Activated B cell treated with CpG ODN at 0.5 μM for 24 hours (primary cell): ENCODE measurements at regions of chr19 and their contacts with region 1.

Region 1: GRCh38 chr19:41263850-41264580 is at the start of gene HNRNPUL1:
- DNase-seq: peak; percentile 98
- ATAC-seq: peak; percentile 77
- H3K4me3 Mint-ChIP-seq: peak within 1 kb of the TSS; percentile 96
- H3K27ac Mint-ChIP-seq: peak within 1 kb of the TSS; percentile 99
- H3K4me1 Mint-ChIP-seq: peaks cover 48% of the 10 kb centered on the region
- H3K27me3 Mint-ChIP-seq: no peaks in the 10 kb centered on the region
- CTCF ChIP-seq: no peak
- total RNA-seq, gene HNRNPUL1: 235 and 244 TPM in 2 replicates

Region 2: DNA sequence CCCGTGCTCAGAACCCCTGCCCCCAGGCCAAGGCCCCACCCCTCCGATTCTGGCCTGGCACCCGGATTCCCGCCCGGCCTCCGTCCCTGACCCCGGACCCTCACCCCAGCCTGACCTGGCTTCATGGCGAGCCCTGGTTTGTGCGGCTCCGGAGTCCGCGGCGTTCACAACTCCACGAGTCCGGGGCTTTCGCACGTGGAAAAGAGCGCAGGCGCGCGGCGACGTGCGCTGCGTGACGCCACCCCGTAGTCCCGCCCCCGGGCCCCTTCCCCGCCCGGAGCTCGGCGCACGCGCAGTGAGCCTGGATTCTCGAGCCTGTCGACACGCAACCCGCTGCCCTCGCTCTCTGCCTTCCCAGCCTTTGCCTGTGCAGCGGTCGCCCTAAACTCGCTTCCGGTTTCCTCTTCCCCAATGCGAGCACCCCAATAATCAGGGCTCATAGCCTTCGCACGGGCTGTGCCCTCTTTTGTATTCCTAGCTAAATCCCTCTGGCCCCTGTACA is 1417.8 kb before region 1 on chr19 and contains the start of gene FBL:
- CTCF ChIA-PET with region 1: no interaction called
- POLR2A ChIA-PET with region 1: no interaction called
- intact Hi-C with region 1: loop called (anchors 5 kb)
- DNase-seq: peak; percentile 98
- ATAC-seq: peak; percentile 94
- H3K4me3 Mint-ChIP-seq: peak within 1 kb of the TSS; percentile 93
- H3K27ac Mint-ChIP-seq: peak within 1 kb of the TSS; percentile 93
- H3K4me1 Mint-ChIP-seq: peaks cover 45% of the 10 kb centered on the region
- H3K27me3 Mint-ChIP-seq: no peaks in the 10 kb centered on the region
- CTCF ChIP-seq: no peak
- total RNA-seq, gene FBL: 420 and 482 TPM in 2 replicates

Region 3: DNA sequence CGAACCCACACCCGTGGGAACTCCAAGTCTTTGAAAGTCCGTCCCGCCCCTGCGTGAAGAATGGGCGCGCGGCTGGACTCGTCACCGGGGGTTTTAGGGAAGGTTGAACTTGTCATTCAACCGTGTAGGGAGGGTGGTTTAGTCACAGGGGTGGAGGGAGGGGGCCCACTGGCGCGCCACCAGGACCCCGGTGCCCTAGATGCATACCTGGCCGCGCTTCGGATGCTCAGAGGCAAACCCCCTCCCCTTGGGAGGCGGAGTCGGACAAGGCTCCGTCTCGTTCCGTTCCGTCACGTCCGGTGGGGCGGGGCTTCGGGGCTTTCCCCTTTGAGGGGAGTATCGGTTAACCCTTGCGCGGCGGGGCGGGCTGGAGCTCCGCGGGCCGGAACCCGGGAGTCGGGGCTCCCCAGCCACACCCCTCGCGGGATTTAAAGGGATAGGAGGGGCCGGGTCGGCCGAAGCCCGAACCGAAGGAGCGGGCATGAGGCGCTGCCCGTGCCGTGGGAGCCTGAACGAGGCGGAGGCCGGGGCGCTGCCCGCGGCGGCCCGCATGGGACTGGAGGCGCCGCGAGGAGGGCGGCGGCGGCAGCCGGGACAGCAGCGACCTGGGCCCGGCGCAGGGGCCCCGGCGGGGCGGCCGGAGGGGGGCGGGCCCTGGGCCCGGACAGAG is 547.2 kb before region 1 on chr19 and contains the starts of genes COQ8B and ITPKC:
- CTCF ChIA-PET with region 1: no interaction called
- POLR2A ChIA-PET with region 1: interaction called, 10 read pairs
- intact Hi-C with region 1: loop called (anchors 1 kb)
- DNase-seq: peak; percentile 100
- ATAC-seq: peak; percentile 70
- H3K4me3 Mint-ChIP-seq: peak within 1 kb of the TSS; percentile 90
- H3K27ac Mint-ChIP-seq: peak within 1 kb of the TSS; percentile 95
- H3K4me1 Mint-ChIP-seq: peaks cover 63% of the 10 kb centered on the region
- H3K27me3 Mint-ChIP-seq: no peaks in the 10 kb centered on the region
- CTCF ChIP-seq: no peak
- total RNA-seq, gene COQ8B: 34.4 and 38.5 TPM in 2 replicates
- total RNA-seq, gene ITPKC: 13.0 and 13.3 TPM in 2 replicates

Region 4: DNA sequence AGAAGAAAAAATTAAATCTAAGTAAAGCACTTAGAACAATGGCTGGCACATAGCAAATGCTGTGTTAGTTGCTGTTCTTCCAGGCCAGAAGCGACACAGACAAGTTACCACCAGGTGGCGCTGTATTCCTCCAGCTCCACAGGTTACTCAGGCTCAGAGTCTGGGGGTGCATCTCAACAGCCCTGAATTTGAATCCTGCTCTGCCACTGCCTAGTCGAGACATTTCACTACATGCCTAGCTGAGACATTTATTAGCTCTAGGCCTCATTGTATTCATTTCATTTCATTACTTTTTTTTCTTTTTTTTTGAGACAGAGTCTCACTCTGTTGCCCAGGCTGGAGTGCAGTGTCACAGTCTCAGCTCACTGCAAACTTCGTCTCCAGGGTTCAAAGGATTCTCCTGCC is 289.4 kb before region 1 on chr19:
- CTCF ChIA-PET with region 1: no interaction called
- POLR2A ChIA-PET with region 1: interaction called, 5 read pairs
- intact Hi-C with region 1: loop called (anchors 1 kb)
- DNase-seq: peak; percentile 46
- ATAC-seq: peak; percentile 62
- H3K4me3 Mint-ChIP-seq: no peak overlapping the region
- H3K27ac Mint-ChIP-seq: no peak overlapping the region
- H3K4me1 Mint-ChIP-seq: no peaks in the 10 kb centered on the region
- H3K27me3 Mint-ChIP-seq: peaks cover 29% of the 10 kb centered on the region
- CTCF ChIP-seq: no peak

Region 5: DNA sequence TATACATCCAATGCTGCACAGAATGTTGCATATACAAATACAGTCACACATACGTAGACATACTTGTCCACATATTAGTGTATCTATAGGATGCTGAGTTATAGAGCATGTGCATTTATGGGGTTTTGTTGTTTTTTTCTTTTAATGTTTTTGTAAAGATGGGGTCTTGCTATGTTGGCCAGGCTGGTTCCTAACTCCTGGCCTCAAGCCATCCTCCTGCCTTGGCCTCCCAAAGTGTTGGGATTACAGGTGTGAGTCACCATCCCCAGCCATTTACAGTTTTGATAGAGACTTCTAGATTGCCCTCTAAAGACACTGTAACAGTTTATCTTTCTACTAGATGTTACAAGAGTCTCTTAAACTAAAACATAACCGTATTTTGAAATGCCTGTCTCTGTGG is 14.5 kb after region 1 on chr19:
- CTCF ChIA-PET with region 1: no interaction called
- POLR2A ChIA-PET with region 1: no interaction called
- intact Hi-C with region 1: no loop called
- DNase-seq: no peak
- ATAC-seq: no peak
- H3K4me3 Mint-ChIP-seq: no peak overlapping the region
- H3K27ac Mint-ChIP-seq: no peak overlapping the region
- H3K4me1 Mint-ChIP-seq: no peaks in the 10 kb centered on the region
- H3K27me3 Mint-ChIP-seq: no peaks in the 10 kb centered on the region
- CTCF ChIP-seq: no peak

Region 6: GRCh38 chr19:41310033-41310758 is 46.2 kb after region 1 on chr19 and contains the start of gene CCDC97:
- CTCF ChIA-PET with region 1: interaction called, 30 read pairs
- POLR2A ChIA-PET with region 1: interaction called, 69 read pairs
- intact Hi-C with region 1: loop called (anchors 1 kb)
- DNase-seq: peak; percentile 92
- ATAC-seq: peak; percentile 76
- H3K4me3 Mint-ChIP-seq: peak within 1 kb of the TSS; percentile 99
- H3K27ac Mint-ChIP-seq: peak within 1 kb of the TSS; percentile 100
- H3K4me1 Mint-ChIP-seq: peaks cover 65% of the 10 kb centered on the region
- H3K27me3 Mint-ChIP-seq: no peaks in the 10 kb centered on the region
- CTCF ChIP-seq: no peak
- total RNA-seq, gene CCDC97: 61.7 and 65.3 TPM in 2 replicates

Region 7: DNA sequence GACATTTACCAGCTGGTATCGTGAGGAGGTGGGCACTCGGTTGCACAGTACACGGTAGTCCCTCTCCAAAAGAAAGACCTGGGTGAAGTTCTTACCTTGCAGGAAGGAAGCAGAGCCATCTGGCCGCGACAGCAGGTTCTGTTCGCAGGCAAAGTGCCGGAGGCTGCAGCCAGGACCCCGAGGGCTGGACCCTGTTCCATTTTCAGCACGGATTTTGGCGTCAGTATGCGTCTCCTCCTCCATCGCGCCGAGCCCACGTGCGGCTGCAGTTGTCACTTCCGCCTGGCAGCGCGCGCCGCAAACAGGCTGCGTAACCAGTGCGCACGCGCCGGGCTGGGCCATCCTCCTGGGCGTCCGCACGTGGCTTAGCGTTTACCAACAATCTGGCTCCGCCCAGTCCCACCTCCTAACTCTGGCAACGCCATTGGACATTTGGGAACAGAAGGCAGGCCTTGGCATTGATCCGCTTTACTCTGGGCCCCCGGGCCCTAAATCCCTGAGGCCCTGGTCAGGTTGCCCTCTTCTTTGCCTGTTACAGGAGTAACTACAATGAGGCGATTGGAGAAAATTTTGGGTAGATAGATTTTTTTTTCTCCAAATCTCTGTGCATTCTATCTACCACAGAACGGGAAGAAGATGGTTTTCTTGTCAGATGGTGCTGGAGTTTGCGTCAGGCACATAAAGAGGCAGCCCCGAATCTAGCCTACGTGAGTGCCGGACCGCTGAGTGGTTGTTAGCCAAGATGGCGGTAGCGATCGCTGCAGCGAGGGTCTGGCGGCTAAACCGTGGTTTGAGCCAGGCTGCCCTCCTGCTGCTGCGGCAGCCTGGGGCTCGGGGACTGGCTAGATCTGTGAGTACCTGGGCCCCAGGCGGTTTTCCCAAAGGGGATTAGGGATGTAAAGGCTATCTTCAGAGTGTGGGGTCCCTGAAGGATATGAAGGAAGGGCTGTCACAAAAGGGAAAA is 133.4 kb after region 1 on chr19 and contains the starts of genes BCKDHA and EXOSC5:
- CTCF ChIA-PET with region 1: no interaction called
- POLR2A ChIA-PET with region 1: interaction called, 5 read pairs
- intact Hi-C with region 1: loop called (anchors 1 kb)
- DNase-seq: peak; percentile 95
- ATAC-seq: peak; percentile 98
- H3K4me3 Mint-ChIP-seq: peak within 1 kb of the TSS; percentile 98
- H3K27ac Mint-ChIP-seq: peak within 1 kb of the TSS; percentile 99
- H3K4me1 Mint-ChIP-seq: peaks cover 47% of the 10 kb centered on the region
- H3K27me3 Mint-ChIP-seq: no peaks in the 10 kb centered on the region
- CTCF ChIP-seq: no peak
- total RNA-seq, gene BCKDHA: 22.2 and 25.2 TPM in 2 replicates
- total RNA-seq, gene EXOSC5: 30.1 and 31.6 TPM in 2 replicates